GM10248 (cell line): ENCODE measurements at regions of chr6 and their contacts with region 1.

Region 1: GRCh38 chr6:89792873-89793272 is 26.7 kb downstream of the MDN1 start:
- DNase-seq: peak; percentile 53
- CTCF ChIP-seq: peak; percentile 44

Region 2: GRCh38 chr6:89281779-89282246 is 511.1 kb before region 1 on chr6:
- CTCF ChIA-PET with region 1: no interaction called
- POLR2A ChIA-PET with region 1: no interaction called
- DNase-seq: peak; percentile 86
- CTCF ChIP-seq: peak; percentile 67

Region 3: DNA sequence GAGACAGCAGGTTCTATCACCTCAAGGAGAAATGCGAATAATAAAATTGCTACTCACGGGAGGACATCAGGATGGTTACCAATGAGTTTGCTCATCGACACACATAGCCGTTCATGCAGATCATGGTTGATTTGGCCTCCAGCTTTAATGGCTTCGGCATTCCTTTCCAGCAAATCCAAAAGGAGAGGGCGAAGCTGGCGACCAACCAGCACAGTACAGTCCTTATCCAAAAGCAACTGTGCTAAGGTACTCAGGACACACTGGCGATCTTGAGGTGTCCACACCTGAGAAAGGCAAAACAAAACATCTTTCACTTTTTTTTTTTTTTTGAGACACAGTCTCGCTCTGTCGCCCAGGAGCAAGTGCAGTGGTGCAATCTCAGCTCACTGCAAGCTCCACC is 10.4 kb after region 1 on chr6:
- CTCF ChIA-PET with region 1: interaction called, 14 read pairs
- POLR2A ChIA-PET with region 1: no interaction called
- DNase-seq: no peak
- CTCF ChIP-seq: no peak